Panc1 (cell line): ENCODE measurements at regions of chr7 and their contacts with region 1.

Region 1: GRCh38 chr7:68994841-68995240 is 603.4 kb upstream of the AUTS2 start:
- DNase-seq: no peak
- ATAC-seq: no peak
- H3K4me3 ChIP-seq: no peak overlapping the region
- H3K27ac ChIP-seq: no peak overlapping the region
- H3K4me1 ChIP-seq: no peaks in the 10 kb centered on the region
- H3K27me3 ChIP-seq: no peaks in the 10 kb centered on the region
- CTCF ChIP-seq: no peak

Region 2: GRCh38 chr7:68015978-68016532 is 978.8 kb before region 1 on chr7:
- CTCF ChIA-PET with region 1: no interaction called
- POLR2A ChIA-PET with region 1: interaction called, 14 read pairs
- in situ Hi-C with region 1: no loop called
- intact Hi-C with region 1: no loop called
- DNase-seq: no peak
- ATAC-seq: no peak
- H3K4me3 ChIP-seq: no peak overlapping the region
- H3K27ac ChIP-seq: no peak overlapping the region
- H3K4me1 ChIP-seq: no peaks in the 10 kb centered on the region
- H3K27me3 ChIP-seq: no peaks in the 10 kb centered on the region
- CTCF ChIP-seq: no peak

Region 3: GRCh38 chr7:68971634-68972340 is 23.1 kb before region 1 on chr7:
- CTCF ChIA-PET with region 1: no interaction called
- POLR2A ChIA-PET with region 1: no interaction called
- in situ Hi-C with region 1: no loop called
- intact Hi-C with region 1: no loop called
- DNase-seq: no peak
- ATAC-seq: no peak
- H3K4me3 ChIP-seq: no peak overlapping the region
- H3K27ac ChIP-seq: no peak overlapping the region
- H3K4me1 ChIP-seq: no peaks in the 10 kb centered on the region
- H3K27me3 ChIP-seq: no peaks in the 10 kb centered on the region
- CTCF ChIP-seq: no peak